ENCODE measurements at regions of chr4 and their contacts with region 1.

Region 1: GRCh38 chr4:83110223-83110945 is 4.1 kb downstream of the PLAC8 start:
- DNase-seq: peak; percentile 94
- ATAC-seq: peak; percentile 75
- H3K4me3 ChIP-seq: peak overlapping the region; percentile 64 to 100 (median 75)
- H3K4me3 Mint-ChIP-seq: peak overlapping the region; percentile 97
- H3K27ac ChIP-seq: peak overlapping the region; percentile 91
- H3K27ac Mint-ChIP-seq: peak overlapping the region; percentile 99
- H3K4me1 ChIP-seq: peaks cover 44 to 48% of the 10 kb centered on the region in 2 donors
- H3K4me1 Mint-ChIP-seq: peaks cover 60% of the 10 kb centered on the region
- H3K27me3 ChIP-seq: no peaks in the 10 kb centered on the region
- H3K27me3 Mint-ChIP-seq: no peaks in the 10 kb centered on the region
- CTCF ChIP-seq: peak; percentile 75

Region 2: DNA sequence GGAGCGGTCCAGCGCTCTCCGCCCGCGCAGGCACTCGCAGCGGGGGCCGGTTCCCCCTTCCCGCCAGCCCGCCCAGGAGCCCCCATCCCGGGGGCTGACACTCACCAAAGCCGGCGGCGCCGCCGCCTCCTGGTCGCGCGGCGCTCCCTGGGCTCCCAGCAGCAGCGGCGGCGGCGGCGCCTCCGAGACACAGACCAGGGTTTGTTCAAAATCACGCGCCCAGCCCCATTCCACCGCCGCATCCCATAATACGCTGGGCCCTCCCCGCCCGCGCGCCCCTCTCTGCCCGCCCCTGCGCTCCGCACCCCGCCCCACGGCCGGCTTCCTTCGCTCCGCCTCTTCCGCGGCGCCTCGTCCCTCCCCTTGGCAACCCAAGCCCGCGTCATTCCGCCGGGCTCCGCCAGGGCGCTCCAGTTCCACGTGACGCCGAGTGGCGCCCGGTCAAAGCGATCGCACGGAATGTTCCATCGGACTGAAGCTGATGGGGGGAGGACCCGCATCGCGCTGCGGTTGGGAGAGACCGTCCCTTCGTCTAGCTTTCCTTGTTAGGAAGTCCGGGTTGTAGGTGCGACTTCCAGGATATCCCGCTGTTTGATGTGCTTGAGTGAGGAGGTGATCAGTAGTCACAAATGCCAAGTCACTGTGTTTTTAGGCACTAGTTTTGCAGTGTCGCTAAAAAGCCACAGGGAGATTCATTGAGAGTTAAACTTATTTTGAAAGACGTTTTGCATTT is 97.5 kb before region 1 on chr4:
- CTCF ChIA-PET with region 1: no interaction called
- POLR2A ChIA-PET with region 1: no interaction called
- intact Hi-C with region 1: loop called (anchors 2 kb)
- DNase-seq: peak; percentile 99
- ATAC-seq: peak; percentile 89
- H3K4me3 ChIP-seq: peak overlapping the region; percentile 56 to 87 (median 79)
- H3K4me3 Mint-ChIP-seq: peak overlapping the region; percentile 92
- H3K27ac ChIP-seq: peak overlapping the region; percentile 37 to 72
- H3K27ac Mint-ChIP-seq: peak overlapping the region; percentile 91
- H3K4me1 ChIP-seq: peaks cover 24 to 33% of the 10 kb centered on the region in 2 donors
- H3K4me1 Mint-ChIP-seq: peaks cover 43% of the 10 kb centered on the region
- H3K27me3 ChIP-seq: no peaks in the 10 kb centered on the region
- H3K27me3 Mint-ChIP-seq: no peaks in the 10 kb centered on the region
- CTCF ChIP-seq: peak; percentile 59

Region 3: GRCh38 chr4:83083925-83084475 is 26.4 kb before region 1 on chr4:
- CTCF ChIA-PET with region 1: interaction called, 17 read pairs
- POLR2A ChIA-PET with region 1: interaction called, 10 read pairs
- intact Hi-C with region 1: loop called (anchors 2 kb)
- DNase-seq: peak; percentile 83
- ATAC-seq: peak; percentile 98
- H3K4me3 ChIP-seq: peak overlapping the region in 2 of 5 experiments; percentile 15 to 32
- H3K4me3 Mint-ChIP-seq: peak overlapping the region; percentile 50
- H3K27ac ChIP-seq: peak overlapping the region; percentile 77 to 93
- H3K27ac Mint-ChIP-seq: peak overlapping the region; percentile 92
- H3K4me1 ChIP-seq: peaks cover 26 to 37% of the 10 kb centered on the region in 2 donors
- H3K4me1 Mint-ChIP-seq: peaks cover 44% of the 10 kb centered on the region
- H3K27me3 ChIP-seq: no peaks in the 10 kb centered on the region
- H3K27me3 Mint-ChIP-seq: no peaks in the 10 kb centered on the region
- CTCF ChIP-seq: peak; percentile 58

Region 4: GRCh38 chr4:83138946-83139345 is 28.6 kb after region 1 on chr4:
- CTCF ChIA-PET with region 1: interaction called, 16 read pairs
- POLR2A ChIA-PET with region 1: interaction called, 5 read pairs
- intact Hi-C with region 1: loop called (anchors 2 kb)
- DNase-seq: no peak
- ATAC-seq: peak; percentile 73
- H3K4me3 ChIP-seq: no peak overlapping the region
- H3K4me3 Mint-ChIP-seq: peak overlapping the region; percentile 48
- H3K27ac ChIP-seq: peak overlapping the region in 1 of 2 donors; percentile 4
- H3K27ac Mint-ChIP-seq: peak overlapping the region; percentile 89
- H3K4me1 ChIP-seq: peaks cover 45 to 47% of the 10 kb centered on the region in 2 donors
- H3K4me1 Mint-ChIP-seq: peaks cover 54% of the 10 kb centered on the region
- H3K27me3 ChIP-seq: no peaks in the 10 kb centered on the region
- H3K27me3 Mint-ChIP-seq: no peaks in the 10 kb centered on the region
- CTCF ChIP-seq: no peak

Region 5: DNA sequence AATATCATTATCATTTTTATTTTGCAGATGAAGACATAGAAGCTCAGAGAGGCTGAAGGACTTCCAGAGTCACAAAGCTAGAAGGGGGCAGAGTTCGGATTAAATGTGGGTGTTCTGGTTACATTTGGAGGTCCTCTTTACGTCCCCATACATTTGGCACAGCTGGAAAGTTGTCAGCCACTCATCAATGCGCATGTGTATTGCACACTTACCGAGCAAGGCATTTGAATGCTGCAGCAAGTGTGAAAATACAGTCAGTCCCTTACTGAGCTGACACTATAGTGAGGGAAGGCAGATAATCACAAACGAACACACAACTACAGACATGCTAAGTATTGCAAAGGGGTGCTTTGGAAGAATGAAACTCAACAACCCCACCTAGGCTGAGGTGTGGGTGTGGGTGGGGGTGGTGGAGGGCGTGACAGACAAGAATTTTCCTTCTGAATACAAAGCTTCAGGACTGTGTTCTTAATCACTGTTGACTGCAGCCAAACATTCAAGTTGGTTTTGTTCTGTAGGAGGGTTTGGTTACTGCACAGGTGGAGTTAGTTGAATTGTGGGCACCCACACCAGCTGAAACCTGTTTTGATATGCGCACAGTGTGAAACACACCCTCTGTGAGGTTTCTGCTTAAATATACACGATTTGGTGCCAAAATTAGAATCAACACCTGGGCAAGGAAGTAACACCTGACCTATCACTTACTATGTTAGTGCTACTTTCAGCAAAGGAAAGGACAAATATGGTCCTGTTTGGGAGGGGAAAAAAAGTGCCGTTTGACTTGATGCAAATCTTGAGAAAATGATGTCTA is 101.9 kb after region 1 on chr4:
- CTCF ChIA-PET with region 1: interaction called, 45 read pairs
- POLR2A ChIA-PET with region 1: interaction called, 19 read pairs
- intact Hi-C with region 1: loop called (anchors 1 kb)
- DNase-seq: peak; percentile 86
- ATAC-seq: peak; percentile 87
- H3K4me3 ChIP-seq: peak overlapping the region in 2 of 5 experiments; percentile 2 to 45
- H3K4me3 Mint-ChIP-seq: peak overlapping the region; percentile 66
- H3K27ac ChIP-seq: peak overlapping the region; percentile 71 to 82
- H3K27ac Mint-ChIP-seq: peak overlapping the region; percentile 90
- H3K4me1 ChIP-seq: peaks cover 85 to 87% of the 10 kb centered on the region in 2 donors
- H3K4me1 Mint-ChIP-seq: peaks cover 83% of the 10 kb centered on the region
- H3K27me3 ChIP-seq: no peaks in the 10 kb centered on the region
- H3K27me3 Mint-ChIP-seq: no peaks in the 10 kb centered on the region
- CTCF ChIP-seq: no peak

Region 6: DNA sequence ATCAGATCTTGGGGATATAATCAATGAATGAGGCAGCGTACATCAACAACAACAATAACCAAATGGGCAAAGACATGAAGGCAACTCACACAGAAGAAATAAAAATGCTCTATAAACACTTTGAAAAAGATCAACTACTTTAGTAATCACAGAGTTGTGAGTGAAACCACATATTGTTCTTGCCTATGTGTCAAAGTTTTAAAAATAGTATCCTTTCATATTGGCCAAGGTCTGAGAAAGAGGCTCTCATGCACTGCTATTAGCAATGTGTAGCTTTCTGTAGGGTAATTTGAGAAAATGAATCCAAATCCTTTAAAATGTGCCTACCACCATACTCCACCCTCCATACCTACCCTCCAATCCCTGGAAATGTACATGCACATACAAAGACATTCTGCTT is 149.2 kb after region 1 on chr4:
- CTCF ChIA-PET with region 1: interaction called, 72 read pairs
- POLR2A ChIA-PET with region 1: interaction called, 15 read pairs
- intact Hi-C with region 1: loop called (anchors 1 kb)
- DNase-seq: no peak
- ATAC-seq: no peak
- H3K4me3 ChIP-seq: no peak overlapping the region
- H3K4me3 Mint-ChIP-seq: no peak overlapping the region
- H3K27ac ChIP-seq: peak overlapping the region in 1 of 2 donors; percentile 5
- H3K27ac Mint-ChIP-seq: peak overlapping the region; percentile 21
- H3K4me1 ChIP-seq: peaks cover 44 to 53% of the 10 kb centered on the region in 2 donors
- H3K4me1 Mint-ChIP-seq: peaks cover 42% of the 10 kb centered on the region
- H3K27me3 ChIP-seq: no peaks in the 10 kb centered on the region
- H3K27me3 Mint-ChIP-seq: no peaks in the 10 kb centered on the region
- CTCF ChIP-seq: no peak

Region 7: GRCh38 chr4:83961575-83961974 is 851.2 kb after region 1 on chr4:
- CTCF ChIA-PET with region 1: no interaction called
- POLR2A ChIA-PET with region 1: no interaction called
- intact Hi-C with region 1: no loop called
- DNase-seq: no peak
- ATAC-seq: no peak
- H3K4me3 ChIP-seq: no peak overlapping the region
- H3K4me3 Mint-ChIP-seq: no peak overlapping the region
- H3K27ac ChIP-seq: no peak overlapping the region
- H3K27ac Mint-ChIP-seq: no peak overlapping the region
- H3K4me1 ChIP-seq: no peaks in the 10 kb centered on the region
- H3K4me1 Mint-ChIP-seq: no peaks in the 10 kb centered on the region
- H3K27me3 ChIP-seq: no peaks in the 10 kb centered on the region
- H3K27me3 Mint-ChIP-seq: no peaks in the 10 kb centered on the region
- CTCF ChIP-seq: no peak

Measured in B cell (primary cell).